ENCODE measurements at regions of chr6 and their contacts with region 1.

Region 1: GRCh38 chr6:35688581-35689322 is at the start of gene FKBP5:
- H3K4me3 Mint-ChIP-seq: peak within 1 kb of the TSS; percentile 94
- H3K27ac Mint-ChIP-seq: peak within 1 kb of the TSS; percentile 89
- H3K4me1 Mint-ChIP-seq: peaks cover 35% of the 10 kb centered on the region
- H3K27me3 Mint-ChIP-seq: no peaks in the 10 kb centered on the region

Region 2: DNA sequence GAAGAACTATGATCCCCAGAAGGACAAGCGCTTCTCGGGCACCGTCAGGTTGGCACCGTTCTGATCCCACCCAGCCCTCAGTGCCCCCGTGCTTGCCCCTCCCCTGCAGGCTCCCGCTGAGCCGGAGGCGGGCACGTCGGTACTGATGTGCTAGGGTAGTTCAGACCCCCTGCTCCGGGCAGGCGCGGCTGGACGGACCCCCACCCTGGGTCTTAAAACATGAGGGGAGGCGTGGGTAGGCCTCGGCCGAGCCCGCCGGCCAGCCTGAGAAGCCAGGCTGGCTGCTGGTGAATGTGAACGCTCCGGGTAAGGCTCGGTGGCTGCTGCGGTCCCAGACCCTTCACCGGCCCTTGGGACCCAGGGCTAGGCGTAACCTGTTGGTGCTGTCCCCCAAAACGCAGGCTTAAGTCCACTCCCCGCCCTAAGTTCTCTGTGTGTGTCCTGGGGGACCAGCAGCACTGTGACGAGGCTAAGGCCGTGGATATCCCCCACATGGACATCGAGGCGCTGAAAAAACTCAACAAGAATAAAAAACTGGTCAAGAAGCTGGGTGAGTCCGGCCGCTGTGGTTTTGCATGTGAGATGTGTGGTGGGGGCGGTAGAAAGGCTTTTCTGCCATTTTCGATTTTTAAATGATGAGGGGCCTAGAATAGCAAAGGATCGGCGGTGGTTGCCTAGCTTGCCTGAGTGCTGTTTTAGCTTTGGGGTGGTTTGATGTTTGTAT is 219.6 kb before region 1 on chr6:
- intact Hi-C with region 1: no loop called
- H3K4me3 Mint-ChIP-seq: peak overlapping the region; percentile 99
- H3K27ac Mint-ChIP-seq: peak overlapping the region; percentile 99
- H3K4me1 Mint-ChIP-seq: peaks cover 34% of the 10 kb centered on the region
- H3K27me3 Mint-ChIP-seq: no peaks in the 10 kb centered on the region

Region 3: DNA sequence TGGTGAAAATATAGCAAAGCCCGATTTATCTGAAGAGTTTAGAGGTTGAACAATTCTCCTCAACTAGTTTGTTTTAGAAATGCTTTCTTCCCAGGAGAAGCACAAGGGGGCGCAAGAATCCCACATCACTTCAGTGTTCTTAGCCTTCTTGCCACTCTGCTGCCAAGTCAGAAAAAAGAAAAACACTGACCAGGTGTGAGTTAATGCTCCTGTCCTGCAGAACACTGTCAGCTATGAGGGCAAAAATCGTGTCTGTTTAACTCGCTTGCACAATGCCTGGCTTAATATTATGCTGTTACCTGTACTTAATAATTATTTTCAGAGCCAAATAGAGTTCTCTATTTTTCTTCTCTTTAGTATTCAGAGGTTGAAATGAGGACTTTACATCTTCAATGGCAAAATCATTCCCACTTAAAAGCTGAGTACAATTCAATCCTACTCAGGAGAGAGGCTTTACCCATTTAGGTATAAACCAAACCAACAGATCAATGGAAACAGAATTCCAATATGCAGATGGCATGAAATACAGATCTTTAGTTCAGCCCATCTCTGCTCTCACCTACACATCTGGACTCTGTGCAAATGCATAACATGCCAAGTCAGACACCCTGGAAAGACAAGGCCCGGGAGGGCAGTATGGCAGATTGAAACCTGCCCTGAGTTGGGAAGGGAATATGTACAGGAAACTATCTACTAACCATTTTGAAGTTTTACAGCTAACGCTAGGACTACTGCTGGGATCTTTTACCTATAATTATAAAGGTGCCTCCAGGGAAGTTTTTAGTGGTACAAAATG is 104.7 kb before region 1 on chr6:
- intact Hi-C with region 1: loop called (anchors 2 kb)
- H3K4me3 Mint-ChIP-seq: no peak overlapping the region
- H3K27ac Mint-ChIP-seq: no peak overlapping the region
- H3K4me1 Mint-ChIP-seq: peaks cover 15% of the 10 kb centered on the region
- H3K27me3 Mint-ChIP-seq: no peaks in the 10 kb centered on the region

Region 4: DNA sequence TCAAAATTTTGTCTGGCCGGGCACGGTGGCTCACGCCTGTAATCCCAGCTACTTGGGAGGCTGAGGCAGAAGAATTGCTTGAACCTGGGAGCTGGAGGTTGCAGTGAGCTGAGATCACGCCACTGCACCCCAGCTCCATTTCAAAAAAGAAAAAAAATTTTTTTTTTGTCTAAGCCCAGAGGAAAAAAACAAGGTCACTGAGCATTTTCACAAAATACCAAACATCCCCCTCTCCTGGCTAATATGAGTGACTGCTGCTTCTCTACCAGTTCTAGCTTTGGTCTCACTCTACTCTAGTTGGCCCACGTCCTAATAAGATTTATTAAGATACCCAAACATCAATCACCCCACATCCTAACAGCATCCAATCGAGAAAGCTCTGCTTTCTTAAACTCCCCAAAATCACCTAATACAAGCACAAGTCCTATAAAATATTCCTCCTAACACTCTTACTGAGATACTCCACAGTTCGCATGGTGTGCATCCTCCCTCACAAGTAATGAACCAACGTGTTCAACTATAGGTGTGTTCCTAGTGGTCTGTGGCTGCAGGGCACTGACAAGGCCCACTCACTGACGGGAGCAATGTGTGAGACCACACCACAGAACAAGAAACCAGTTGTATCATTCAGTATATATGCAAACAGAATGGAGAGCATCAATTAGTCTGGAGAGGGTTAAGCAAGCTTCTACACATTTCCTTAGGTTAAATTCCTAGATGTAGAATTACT is 64.2 kb before region 1 on chr6:
- intact Hi-C with region 1: loop called (anchors 10 kb)
- H3K4me3 Mint-ChIP-seq: no peak overlapping the region
- H3K27ac Mint-ChIP-seq: no peak overlapping the region
- H3K4me1 Mint-ChIP-seq: peaks cover 23% of the 10 kb centered on the region
- H3K27me3 Mint-ChIP-seq: no peaks in the 10 kb centered on the region

Region 5: DNA sequence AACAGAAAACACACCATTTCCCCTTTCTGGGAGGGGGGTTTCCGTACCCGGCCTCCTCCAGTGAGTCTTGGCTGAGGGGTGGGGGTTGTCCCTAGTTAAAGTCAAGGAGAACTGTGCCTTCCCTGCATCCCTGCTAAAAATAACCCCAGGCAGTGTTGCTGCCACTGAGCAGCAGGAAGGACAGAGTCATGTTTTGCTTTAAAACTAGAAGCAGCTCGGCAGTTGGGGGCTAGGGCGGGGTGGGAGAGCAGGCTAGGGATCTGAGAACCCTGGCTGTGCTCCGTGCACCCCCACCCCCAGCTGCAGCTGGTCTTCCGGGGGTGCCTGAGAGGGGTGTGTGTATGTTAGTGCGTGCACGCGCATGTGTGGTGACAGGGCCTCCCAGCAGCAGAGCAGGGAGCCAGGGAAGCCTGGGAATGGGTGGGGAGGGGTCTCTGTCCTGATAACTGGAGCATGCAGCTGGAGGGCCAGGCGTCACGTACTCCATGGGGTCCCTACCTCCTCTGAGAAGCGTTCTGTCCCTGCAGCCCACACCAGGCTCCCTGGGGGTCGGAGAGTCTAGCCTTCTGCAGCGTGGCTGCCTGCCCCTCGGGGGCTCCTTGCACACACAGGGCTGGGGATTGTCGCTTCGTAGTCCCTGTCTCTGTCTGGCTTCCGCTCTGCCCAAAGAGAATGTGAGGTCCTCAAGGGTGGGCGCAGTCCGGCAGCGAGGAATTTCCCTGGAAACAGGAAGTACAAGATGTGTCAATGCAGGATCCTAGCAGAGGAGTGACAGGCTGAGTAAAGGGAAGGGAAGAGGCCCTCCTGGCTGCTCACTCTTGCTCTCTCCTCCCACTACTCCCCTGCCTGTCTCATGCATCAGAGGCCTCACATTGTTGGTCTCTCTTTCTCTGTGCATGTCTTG is 31.3 kb after region 1 on chr6:
- intact Hi-C with region 1: loop called (anchors 2 kb)
- H3K4me3 Mint-ChIP-seq: peak overlapping the region; percentile 81
- H3K27ac Mint-ChIP-seq: peak overlapping the region; percentile 99
- H3K4me1 Mint-ChIP-seq: peaks cover 91% of the 10 kb centered on the region
- H3K27me3 Mint-ChIP-seq: peaks cover 12% of the 10 kb centered on the region

Region 6: DNA sequence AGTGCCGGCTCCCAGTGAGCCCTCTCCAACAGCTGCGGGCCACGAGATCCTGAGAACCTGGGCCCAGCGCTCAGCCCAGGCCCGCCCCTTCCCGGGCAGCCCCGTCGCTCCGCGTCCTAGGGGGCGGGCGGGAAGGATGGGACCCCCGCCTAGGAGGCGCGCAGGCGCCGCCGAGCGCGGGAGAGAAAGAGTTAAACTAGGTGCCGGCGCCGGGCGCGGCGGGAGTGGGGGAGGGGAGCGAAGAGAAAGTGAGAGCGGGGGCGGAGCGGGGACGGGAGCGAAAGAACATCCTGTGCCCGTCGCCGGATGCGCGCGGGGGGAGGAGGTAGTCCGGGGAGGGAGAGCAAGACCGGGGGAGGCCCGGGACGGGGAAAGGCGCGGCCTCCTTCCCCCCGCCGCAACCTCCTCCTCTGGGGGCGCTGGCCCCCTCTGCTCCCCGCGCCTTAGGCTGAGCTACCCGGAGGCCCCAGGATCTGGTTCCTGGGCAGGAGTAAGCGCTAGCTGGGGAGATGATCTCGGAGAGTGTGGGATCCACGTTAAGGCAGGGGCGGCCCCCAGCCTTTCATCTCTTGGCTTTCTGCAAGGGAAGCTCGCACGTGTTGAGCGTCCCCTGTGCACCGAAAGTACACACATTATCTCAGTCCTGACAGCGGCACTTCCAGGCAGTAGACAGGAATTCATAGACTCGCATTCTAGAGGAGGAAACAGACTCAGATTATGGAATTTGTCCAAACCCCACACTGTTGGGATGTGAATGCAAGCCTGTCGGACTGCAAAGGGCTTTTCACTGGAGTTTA is 43.2 kb after region 1 on chr6:
- intact Hi-C with region 1: loop called (anchors 1 kb)
- H3K4me3 Mint-ChIP-seq: peak overlapping the region; percentile 82
- H3K27ac Mint-ChIP-seq: peak overlapping the region; percentile 80
- H3K4me1 Mint-ChIP-seq: peaks cover 59% of the 10 kb centered on the region
- H3K27me3 Mint-ChIP-seq: no peaks in the 10 kb centered on the region

Measured in dendritic cell treated with granulocyte-macrophage colony-stimulating factor and Interleukin-4, amounts not matched to agents 40 ng/mL and 50 ng/mL, for 4 days (primary cell).